Right ventricle myocardium inferior (tissue), 1 donor: ENCODE measurements at regions of chr11 and their contacts with region 1.

Region 1: GRCh38 chr11:19191530-19192169 is 10.1 kb downstream of the CSRP3 start:
- DNase-seq: no peak
- ATAC-seq: peak; percentile 82

Region 2: GRCh38 chr11:19173964-19174638 is 17.5 kb before region 1 on chr11:
- intact Hi-C with region 1: loop called (anchors 2 kb)
- DNase-seq: no peak
- ATAC-seq: no peak